ENCODE measurements at regions of chr12 and their contacts with region 1.

Region 1: DNA sequence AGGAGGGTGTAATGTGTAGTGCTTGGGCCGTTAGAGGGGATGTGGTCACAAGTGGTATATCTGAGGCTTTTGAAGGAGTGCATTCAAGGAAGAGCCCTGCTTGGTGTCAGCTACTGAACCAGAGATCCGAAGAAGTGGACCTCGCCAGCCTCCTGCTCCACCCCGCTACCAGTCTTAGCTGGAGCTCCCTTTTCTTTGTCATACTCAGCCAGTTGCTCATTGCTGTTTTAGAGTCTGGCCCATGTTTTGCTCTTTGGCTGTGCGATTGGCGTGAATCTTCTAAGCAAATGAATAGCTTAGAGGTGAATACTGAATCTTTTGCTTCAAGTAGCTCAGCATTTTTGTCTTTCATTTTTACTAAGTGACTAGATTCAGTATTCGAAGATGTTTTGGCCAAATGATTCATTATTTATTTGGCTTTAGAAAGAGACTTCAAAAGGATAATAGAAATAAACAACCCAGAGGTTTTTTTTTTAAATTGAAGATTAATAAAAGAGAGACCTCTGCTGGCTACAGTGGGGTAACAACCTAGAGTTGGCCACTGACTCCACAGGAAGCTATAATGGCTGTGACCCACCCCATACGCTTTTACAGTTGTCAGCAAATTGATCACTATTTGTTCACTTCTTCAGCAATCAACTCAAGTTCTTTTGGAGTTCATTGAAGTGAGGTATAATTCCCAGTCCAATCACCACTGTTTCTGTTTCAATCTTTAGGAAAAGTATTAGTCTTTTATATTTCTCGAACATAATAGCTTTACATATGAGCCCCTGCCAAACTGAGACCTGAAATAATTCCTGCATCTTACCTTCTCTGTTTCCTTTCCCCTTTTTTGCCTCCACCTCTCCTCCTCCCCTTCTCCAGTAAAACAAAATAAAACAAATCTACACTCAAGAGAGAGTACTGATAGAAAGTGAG is 19.9 kb downstream of the CDKN1B start:
- DNase-seq: peak in 7 of 9 experiments; percentile 31 to 86 (median 62)
- ATAC-seq: peak; percentile 80
- H3K4me3 ChIP-seq: peak overlapping the region; percentile 47 to 51
- H3K4me3 Mint-ChIP-seq: peak overlapping the region; percentile 73
- H3K27ac ChIP-seq: peak overlapping the region; percentile 55 to 80
- H3K27ac Mint-ChIP-seq: peak overlapping the region; percentile 96
- H3K4me1 ChIP-seq: peaks cover 25% of the 10 kb centered on the region
- H3K4me1 Mint-ChIP-seq: peaks cover 35% of the 10 kb centered on the region
- H3K27me3 ChIP-seq: no peaks in the 10 kb centered on the region
- H3K27me3 Mint-ChIP-seq: no peaks in the 10 kb centered on the region
- CTCF ChIP-seq: peak; percentile 80

Region 2: DNA sequence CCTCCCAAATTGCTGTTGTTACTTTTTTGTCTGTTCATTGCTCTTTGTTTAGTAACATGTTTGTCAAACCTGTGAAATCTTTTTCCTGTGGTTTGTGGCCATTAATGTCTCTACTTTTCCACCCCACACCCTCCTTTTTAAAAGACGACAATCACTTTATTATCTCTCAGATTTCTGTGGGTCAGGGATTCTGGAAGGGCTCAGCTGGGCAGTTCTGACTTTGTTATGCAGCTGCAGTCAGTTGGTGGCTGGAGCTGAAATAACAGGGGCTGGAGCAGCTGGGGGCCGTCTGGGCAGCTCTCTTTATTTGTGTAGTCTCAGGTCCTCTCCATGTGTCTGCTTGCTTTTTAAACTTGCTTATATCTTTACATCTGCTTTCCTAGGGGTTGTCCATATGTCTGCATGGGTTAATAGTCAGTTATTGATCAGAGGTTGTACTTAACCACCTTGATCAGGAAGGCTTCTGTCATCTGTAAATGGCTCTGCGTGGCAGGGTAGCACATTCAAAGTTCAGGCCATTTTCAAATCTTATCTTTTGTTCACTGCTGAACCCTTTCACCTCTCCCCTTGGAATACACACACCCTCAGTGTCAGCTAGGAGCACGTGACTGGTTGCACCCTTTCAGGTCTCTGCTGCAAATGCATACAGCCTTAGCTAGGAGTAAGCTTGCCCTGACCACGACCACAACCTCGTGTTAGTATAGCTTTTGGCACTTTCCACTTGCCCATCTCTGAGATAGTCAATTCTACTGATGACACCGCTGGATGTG is 352.3 kb before region 1 on chr12:
- CTCF ChIA-PET with region 1: interaction called, 16 read pairs
- POLR2A ChIA-PET with region 1: interaction called, 4 read pairs
- intact Hi-C with region 1: no loop called
- DNase-seq: peak in 8 of 9 experiments; percentile 6 to 78 (median 45)
- ATAC-seq: peak; percentile 43
- H3K4me3 ChIP-seq: no peak overlapping the region
- H3K4me3 Mint-ChIP-seq: peak overlapping the region; percentile 49
- H3K27ac ChIP-seq: peak overlapping the region; percentile 26 to 76
- H3K27ac Mint-ChIP-seq: peak overlapping the region; percentile 89
- H3K4me1 ChIP-seq: peaks cover 20% of the 10 kb centered on the region
- H3K4me1 Mint-ChIP-seq: peaks cover 56% of the 10 kb centered on the region
- H3K27me3 ChIP-seq: no peaks in the 10 kb centered on the region
- H3K27me3 Mint-ChIP-seq: no peaks in the 10 kb centered on the region
- CTCF ChIP-seq: no peak

Region 3: DNA sequence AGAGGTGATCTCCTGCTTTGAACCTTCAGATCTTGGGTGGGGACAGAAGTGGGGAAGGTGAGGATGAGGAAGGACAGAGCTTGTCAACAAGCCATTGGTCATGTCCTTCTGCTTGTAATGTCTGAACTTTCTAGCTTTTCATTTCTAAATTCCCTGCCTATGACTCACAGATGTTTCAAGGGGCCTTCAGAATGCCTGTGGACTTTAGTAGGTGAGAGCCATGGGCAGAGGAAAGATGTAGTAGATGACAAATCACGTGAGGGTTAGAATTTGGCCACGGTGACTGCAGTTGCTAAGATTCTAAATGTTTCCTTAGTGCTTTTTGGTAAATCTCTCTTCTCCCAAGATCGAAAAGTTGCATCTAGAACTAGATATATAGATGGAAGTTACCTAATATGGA is 144.1 kb before region 1 on chr12:
- CTCF ChIA-PET with region 1: interaction called, 10 read pairs
- POLR2A ChIA-PET with region 1: no interaction called
- intact Hi-C with region 1: no loop called
- DNase-seq: no peak
- ATAC-seq: no peak
- H3K4me3 ChIP-seq: no peak overlapping the region
- H3K4me3 Mint-ChIP-seq: no peak overlapping the region
- H3K27ac ChIP-seq: no peak overlapping the region
- H3K27ac Mint-ChIP-seq: no peak overlapping the region
- H3K4me1 ChIP-seq: no peaks in the 10 kb centered on the region
- H3K4me1 Mint-ChIP-seq: peaks cover 3% of the 10 kb centered on the region
- H3K27me3 ChIP-seq: peaks cover 0 to 5% of the 10 kb centered on the region in 2 experiments
- H3K27me3 Mint-ChIP-seq: no peaks in the 10 kb centered on the region
- CTCF ChIP-seq: no peak

Region 4: DNA sequence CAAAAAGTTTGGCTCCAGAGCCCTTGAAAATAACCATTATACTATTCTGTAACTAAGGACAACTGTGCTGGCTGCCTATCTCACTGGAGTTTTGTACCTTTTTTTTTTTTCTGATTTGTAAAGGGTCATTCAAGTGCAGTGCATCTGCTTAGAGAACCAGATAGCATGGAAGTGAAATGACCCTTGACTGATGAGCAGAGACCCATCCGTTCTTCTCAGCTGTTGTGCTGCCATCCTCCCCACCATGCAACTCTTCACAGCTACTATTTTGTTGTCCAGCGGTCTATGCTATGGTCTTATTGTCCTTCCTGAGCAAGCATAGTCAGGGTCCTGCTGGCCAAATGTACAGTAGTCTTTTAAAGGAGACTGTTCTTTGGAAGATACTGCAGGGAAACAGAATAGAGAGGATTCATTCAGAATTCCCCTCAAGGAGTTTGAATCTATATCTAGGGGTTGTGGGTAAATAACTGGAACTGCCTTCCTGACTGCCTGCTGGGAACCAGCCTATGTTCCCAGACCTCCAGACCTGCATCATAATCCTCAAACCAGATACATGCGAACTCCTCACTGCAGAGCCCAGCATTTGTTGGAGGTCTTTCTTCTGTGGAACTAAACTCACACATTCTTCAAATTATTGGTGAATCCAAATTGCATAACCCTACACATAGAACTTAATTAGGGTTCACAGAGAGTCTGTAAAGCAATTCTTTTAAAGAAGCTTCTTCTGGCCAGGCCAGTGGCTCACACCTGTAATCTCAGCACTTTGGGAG is 82.1 kb before region 1 on chr12:
- CTCF ChIA-PET with region 1: interaction called, 56 read pairs
- POLR2A ChIA-PET with region 1: interaction called, 4 read pairs
- intact Hi-C with region 1: no loop called
- DNase-seq: no peak
- ATAC-seq: no peak
- H3K4me3 ChIP-seq: no peak overlapping the region
- H3K4me3 Mint-ChIP-seq: no peak overlapping the region
- H3K27ac ChIP-seq: no peak overlapping the region
- H3K27ac Mint-ChIP-seq: no peak overlapping the region
- H3K4me1 ChIP-seq: no peaks in the 10 kb centered on the region
- H3K4me1 Mint-ChIP-seq: peaks cover 11% of the 10 kb centered on the region
- H3K27me3 ChIP-seq: no peaks in the 10 kb centered on the region
- H3K27me3 Mint-ChIP-seq: no peaks in the 10 kb centered on the region
- CTCF ChIP-seq: no peak

Region 5: DNA sequence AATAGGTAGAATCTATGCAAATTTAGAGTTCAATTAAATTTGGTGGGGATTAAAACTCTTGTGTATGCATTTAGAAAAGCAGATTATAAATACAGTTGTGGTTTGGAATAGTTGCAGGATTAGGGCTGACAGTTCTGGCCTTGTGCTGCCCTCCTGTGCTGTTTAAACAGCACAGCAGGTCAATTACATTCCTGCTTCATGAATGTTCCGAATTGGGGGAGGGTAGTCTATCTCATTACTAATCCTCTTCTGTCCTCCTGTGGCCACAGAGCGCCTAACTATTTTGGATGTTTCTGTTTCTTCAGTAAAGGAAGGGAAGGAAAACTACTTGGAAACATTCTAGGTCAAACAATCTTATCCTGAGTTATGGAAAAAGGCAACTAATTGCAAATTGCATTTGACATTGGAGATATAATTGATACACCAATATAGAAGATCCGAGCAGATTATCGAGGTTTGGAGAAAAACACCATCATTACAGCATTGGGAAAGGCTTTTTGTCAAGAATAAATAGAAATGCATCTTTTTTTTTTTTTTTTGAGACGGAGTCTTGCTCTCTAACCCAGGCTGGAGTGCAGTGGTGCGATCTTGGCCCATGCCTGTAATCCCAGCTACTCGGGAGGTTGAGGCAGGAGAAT is 32.3 kb before region 1 on chr12:
- CTCF ChIA-PET with region 1: interaction called, 13 read pairs
- POLR2A ChIA-PET with region 1: interaction called, 11 read pairs
- intact Hi-C with region 1: no loop called
- DNase-seq: peak in 5 of 9 experiments; percentile 24 to 77 (median 35)
- ATAC-seq: peak; percentile 75
- H3K4me3 ChIP-seq: no peak overlapping the region
- H3K4me3 Mint-ChIP-seq: peak overlapping the region; percentile 50
- H3K27ac ChIP-seq: no peak overlapping the region
- H3K27ac Mint-ChIP-seq: peak overlapping the region; percentile 33
- H3K4me1 ChIP-seq: peaks cover 35% of the 10 kb centered on the region
- H3K4me1 Mint-ChIP-seq: peaks cover 21% of the 10 kb centered on the region
- H3K27me3 ChIP-seq: no peaks in the 10 kb centered on the region
- H3K27me3 Mint-ChIP-seq: no peaks in the 10 kb centered on the region
- CTCF ChIP-seq: peak; percentile 60

Region 6: GRCh38 chr12:12724661-12725545 is 12.1 kb before region 1 on chr12:
- CTCF ChIA-PET with region 1: interaction called, 39 read pairs
- POLR2A ChIA-PET with region 1: interaction called, 127 read pairs
- intact Hi-C with region 1: loop called (anchors 1 kb)
- DNase-seq: peak in 8 of 9 experiments; percentile 82 to 98 (median 86)
- ATAC-seq: peak; percentile 57
- H3K4me3 ChIP-seq: peak overlapping the region; percentile 90 to 92
- H3K4me3 Mint-ChIP-seq: peak overlapping the region; percentile 82
- H3K27ac ChIP-seq: peak overlapping the region; percentile 93 to 97
- H3K27ac Mint-ChIP-seq: peak overlapping the region; percentile 99
- H3K4me1 ChIP-seq: peaks cover 51% of the 10 kb centered on the region
- H3K4me1 Mint-ChIP-seq: peaks cover 52% of the 10 kb centered on the region
- H3K27me3 ChIP-seq: no peaks in the 10 kb centered on the region
- H3K27me3 Mint-ChIP-seq: no peaks in the 10 kb centered on the region
- CTCF ChIP-seq: no peak

Region 7: DNA sequence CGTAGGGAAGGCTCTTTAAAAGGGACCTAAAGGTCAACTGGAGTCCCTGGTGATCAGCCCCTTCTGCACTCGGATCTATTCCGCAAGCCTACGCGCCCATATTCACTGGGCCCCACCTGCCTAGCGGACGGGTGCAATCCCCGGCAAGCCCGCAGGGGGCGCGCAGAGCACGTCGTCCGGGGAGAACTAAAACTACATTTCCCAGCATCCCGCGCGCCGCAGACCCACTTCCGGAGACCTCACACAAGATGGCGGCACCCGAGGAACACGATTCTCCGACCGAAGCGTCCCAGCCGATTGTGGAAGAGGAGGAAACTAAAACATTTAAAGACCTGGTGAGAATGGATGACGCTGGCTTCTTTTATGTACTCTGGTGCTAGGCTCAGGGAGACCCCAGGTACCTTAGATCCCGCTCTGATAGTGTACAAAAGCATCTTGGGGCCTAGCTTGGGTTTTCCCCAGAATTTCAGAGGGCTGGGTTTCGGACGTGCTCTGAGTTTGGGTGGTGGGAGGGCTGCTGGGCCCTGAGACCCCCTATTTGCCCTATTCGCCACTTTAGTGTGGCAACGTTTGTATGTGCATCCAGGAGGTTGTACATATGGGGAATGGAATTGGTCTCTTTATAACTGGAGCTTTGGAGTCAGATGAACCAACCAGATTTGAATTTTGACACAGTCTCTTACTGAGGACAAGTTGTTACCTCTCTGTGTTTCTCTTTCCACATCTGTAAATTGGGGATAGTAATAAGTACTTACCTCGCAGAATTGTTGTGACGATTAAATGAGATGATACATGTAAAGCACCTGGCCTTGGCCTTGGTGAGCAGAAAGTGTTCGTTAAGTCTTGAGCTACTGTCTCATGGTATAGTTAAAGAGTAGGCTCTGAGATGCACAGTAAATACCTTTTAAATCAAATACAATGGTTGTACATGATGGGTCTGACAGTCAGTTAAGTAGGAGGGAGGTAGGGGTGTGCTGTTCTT is 76.4 kb after region 1 on chr12 and contains the start of gene DDX47:
- CTCF ChIA-PET with region 1: interaction called, 3 read pairs
- POLR2A ChIA-PET with region 1: interaction called, 3 read pairs
- intact Hi-C with region 1: loop called in 1 of 2 experiments (anchors 5 kb)
- DNase-seq: peak; percentile 94 to 99 (median 96)
- ATAC-seq: peak; percentile 88
- H3K4me3 ChIP-seq: peak within 1 kb of the TSS; percentile 88 to 98
- H3K4me3 Mint-ChIP-seq: peak within 1 kb of the TSS; percentile 95
- H3K27ac ChIP-seq: peak within 1 kb of the TSS; percentile 78 to 91
- H3K27ac Mint-ChIP-seq: peak within 1 kb of the TSS; percentile 96
- H3K4me1 ChIP-seq: peaks cover 34% of the 10 kb centered on the region
- H3K4me1 Mint-ChIP-seq: peaks cover 65% of the 10 kb centered on the region
- H3K27me3 ChIP-seq: no peaks in the 10 kb centered on the region
- H3K27me3 Mint-ChIP-seq: no peaks in the 10 kb centered on the region
- CTCF ChIP-seq: peak; percentile 93
- total RNA-seq, gene DDX47: 173 to 174 TPM

Region 8: DNA sequence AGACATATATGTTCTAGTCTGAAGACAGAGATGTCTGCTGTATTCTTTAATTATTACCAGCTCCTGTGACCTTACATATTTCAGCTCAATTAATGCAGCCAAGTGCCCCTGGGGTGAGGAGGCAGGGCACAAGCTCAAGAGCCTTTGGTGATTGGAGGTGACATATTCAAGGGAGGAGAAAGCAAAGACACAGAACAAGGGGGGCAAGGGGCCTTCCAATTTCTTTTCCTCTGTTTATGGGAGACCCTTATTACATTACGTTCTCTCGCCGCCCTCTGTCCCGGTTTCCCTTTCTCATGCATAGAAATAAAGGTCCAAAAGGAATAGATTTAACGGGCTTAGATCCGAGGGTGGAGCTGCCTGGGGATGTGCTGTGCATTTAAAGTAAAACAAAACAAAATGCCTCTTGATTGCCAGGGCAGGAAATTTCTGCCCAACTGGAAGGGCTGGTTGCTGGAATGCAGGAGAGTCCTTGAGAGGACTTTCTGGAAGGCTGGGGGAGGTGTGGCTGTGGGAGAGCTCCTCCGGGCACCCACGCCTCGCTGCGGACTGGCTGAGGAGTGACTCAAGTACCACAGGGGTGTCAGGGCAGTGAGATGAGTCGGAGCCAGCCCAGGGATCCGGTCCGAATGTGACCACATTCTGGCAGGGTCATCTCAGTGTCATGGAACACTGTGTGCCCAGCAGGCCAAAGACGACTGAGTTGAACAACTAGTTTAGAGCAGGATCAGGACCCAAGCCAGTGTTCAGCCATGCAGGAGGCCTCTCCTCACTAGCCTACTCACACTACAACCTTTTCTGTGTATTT is 398.6 kb after region 1 on chr12:
- CTCF ChIA-PET with region 1: no interaction called
- POLR2A ChIA-PET with region 1: no interaction called
- intact Hi-C with region 1: no loop called
- DNase-seq: no peak
- ATAC-seq: no peak
- H3K4me3 ChIP-seq: no peak overlapping the region
- H3K4me3 Mint-ChIP-seq: no peak overlapping the region
- H3K27ac ChIP-seq: no peak overlapping the region
- H3K27ac Mint-ChIP-seq: no peak overlapping the region
- H3K4me1 ChIP-seq: no peaks in the 10 kb centered on the region
- H3K4me1 Mint-ChIP-seq: no peaks in the 10 kb centered on the region
- H3K27me3 ChIP-seq: peaks cover 0 to 4% of the 10 kb centered on the region in 2 experiments
- H3K27me3 Mint-ChIP-seq: peaks cover 4% of the 10 kb centered on the region
- CTCF ChIP-seq: no peak